Panc1 (cell line): ENCODE measurements at regions of chr16 and their contacts with region 1.

Region 1: DNA sequence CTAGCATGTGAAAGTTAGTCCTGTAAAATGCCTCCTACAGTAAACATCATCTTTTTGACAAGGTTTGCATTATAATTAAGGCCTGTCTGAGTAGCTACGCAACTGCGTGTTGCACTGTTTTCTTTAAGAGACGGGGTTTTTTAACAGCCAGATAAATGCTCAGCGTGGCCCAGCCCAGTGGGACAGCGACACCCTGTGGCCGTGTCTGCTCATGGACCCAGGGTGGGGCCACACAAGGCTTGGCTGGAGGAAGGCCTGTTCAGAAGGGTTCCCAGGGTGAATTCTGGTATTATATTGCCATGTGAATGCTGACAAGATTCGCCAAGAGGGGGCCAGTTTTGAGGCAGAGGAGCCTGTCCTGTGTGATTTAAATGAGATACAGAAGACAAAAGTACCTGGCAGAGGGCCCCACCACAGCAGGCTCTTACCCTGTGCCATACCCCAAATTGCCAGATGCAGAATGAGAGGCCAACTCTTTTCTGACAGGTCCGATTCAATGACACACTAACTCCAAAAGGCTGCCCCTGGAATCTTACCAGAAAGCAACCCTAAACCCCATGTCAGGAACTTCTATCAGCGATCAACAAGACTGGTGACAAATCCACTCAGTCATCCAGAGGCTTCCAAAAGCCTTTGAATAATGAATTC is 65.9 kb upstream of the IRX6 start:
- DNase-seq: no peak
- ATAC-seq: peak; percentile 93
- H3K4me3 ChIP-seq: no peak overlapping the region
- H3K27ac ChIP-seq: no peak overlapping the region
- H3K4me1 ChIP-seq: no peaks in the 10 kb centered on the region
- H3K27me3 ChIP-seq: no peaks in the 10 kb centered on the region
- CTCF ChIP-seq: peak; percentile 83

Region 2: GRCh38 chr16:54929090-54930004 is 328.7 kb before region 1 on chr16:
- CTCF ChIA-PET with region 1: no interaction called
- POLR2A ChIA-PET with region 1: no interaction called
- in situ Hi-C with region 1: no loop called
- intact Hi-C with region 1: loop called (anchors 5 kb)
- DNase-seq: peak; percentile 86
- ATAC-seq: peak; percentile 90
- H3K4me3 ChIP-seq: peak overlapping the region; percentile 61 to 82
- H3K27ac ChIP-seq: peak overlapping the region; percentile 78
- H3K4me1 ChIP-seq: peaks cover 4% of the 10 kb centered on the region; the same call in 1 of the 2 replicates
- H3K27me3 ChIP-seq: no peaks in the 10 kb centered on the region
- CTCF ChIP-seq: peak; percentile 36

Region 3: DNA sequence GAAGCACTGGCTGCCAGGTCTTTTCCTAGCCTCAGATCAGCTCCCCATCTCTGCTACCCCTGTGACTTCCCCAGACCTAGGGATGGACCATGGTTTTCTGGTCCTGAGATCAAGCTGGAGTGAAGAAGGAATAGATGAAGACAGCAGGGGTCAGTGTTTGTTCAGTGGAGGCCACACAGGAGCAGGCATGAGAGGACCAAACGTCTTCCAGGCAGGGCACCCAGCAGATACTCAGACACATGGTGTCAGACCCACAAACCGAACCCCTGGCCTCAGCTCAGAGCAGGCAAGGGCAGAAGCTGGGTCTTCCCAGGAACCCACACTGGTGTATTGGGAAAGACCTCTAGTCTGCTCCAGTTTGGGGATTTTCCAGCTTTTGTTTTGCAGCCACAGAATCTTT is 137.7 kb before region 1 on chr16:
- CTCF ChIA-PET with region 1: no interaction called
- POLR2A ChIA-PET with region 1: no interaction called
- in situ Hi-C with region 1: no loop called
- intact Hi-C with region 1: loop called (anchors 2 kb)
- DNase-seq: no peak
- ATAC-seq: 0 out of 2 replicates have a peak, but pooled peaks have one; percentile 45
- H3K4me3 ChIP-seq: no peak overlapping the region
- H3K27ac ChIP-seq: no peak overlapping the region
- H3K4me1 ChIP-seq: no peaks in the 10 kb centered on the region
- H3K27me3 ChIP-seq: no peaks in the 10 kb centered on the region
- CTCF ChIP-seq: no peak; the same call in 1 of the 2 replicates

Region 4: DNA sequence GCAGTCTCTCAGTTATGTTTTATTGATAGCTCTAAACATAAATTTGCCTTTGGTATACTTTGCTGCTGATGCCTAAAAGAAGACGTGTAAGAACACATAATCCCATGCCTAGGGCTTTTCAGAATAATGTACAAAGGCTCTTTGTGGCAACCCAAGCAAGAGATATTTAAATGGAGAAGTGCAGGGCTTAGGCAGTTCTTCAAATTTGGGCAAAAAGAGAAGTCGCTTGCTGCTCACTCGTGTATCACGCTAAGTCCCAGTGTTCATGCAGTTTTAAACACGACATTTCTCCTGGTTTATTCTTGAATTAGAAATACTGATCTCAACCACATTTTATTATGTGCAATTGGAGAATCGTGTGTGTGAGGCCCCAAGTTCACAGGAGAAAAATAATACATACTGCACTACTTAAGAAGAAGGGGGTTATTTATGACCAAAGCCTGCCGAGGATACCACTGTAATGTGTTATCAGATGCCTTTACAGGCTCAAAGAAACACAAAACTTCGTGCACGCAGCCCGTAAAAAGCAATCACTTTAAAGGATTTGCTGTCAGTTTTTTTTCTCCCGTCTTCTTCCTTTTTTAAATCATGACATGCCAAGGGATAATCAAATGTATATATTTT is 43.4 kb after region 1 on chr16:
- CTCF ChIA-PET with region 1: no interaction called
- POLR2A ChIA-PET with region 1: no interaction called
- in situ Hi-C with region 1: no loop called
- intact Hi-C with region 1: no loop called
- DNase-seq: no peak
- ATAC-seq: no peak
- H3K4me3 ChIP-seq: no peak overlapping the region
- H3K27ac ChIP-seq: no peak overlapping the region
- H3K4me1 ChIP-seq: no peaks in the 10 kb centered on the region
- H3K27me3 ChIP-seq: no peaks in the 10 kb centered on the region; the same call in 1 of the 2 replicates
- CTCF ChIP-seq: no peak